HEK293T (cell line): ENCODE measurements at regions of chr20 and their contacts with region 1.

Region 1: GRCh38 chr20:31496761-31497295 is 17.4 kb upstream of the HM13 start:
- DNase-seq: no peak

Region 2: GRCh38 chr20:31390490-31390889 is 106.3 kb before region 1 on chr20 and contains the start of gene DEFB119:
- CTCF ChIA-PET with region 1: no interaction called
- POLR2A ChIA-PET with region 1: no interaction called
- DNase-seq: no peak

Region 3: DNA sequence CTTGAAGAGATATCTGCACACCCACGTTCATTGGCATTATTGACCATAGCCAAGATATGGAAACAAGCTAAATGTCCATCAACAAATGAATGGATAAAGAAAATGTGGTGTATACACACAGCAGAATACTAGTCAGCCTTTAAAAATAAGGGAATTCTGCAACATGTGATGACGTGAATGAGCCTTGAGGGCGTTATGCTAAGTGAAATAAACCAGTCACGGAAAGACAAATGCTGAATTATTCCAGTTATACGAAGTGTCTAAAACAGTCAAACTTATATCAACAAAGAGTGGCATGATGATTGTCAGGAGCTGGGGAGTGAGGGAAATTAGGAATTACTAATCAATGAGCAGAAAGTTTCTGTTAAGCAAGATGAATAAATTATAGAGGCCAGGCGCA is 82.4 kb before region 1 on chr20:
- CTCF ChIA-PET with region 1: interaction called, 14 read pairs
- POLR2A ChIA-PET with region 1: no interaction called
- DNase-seq: no peak

Region 4: DNA sequence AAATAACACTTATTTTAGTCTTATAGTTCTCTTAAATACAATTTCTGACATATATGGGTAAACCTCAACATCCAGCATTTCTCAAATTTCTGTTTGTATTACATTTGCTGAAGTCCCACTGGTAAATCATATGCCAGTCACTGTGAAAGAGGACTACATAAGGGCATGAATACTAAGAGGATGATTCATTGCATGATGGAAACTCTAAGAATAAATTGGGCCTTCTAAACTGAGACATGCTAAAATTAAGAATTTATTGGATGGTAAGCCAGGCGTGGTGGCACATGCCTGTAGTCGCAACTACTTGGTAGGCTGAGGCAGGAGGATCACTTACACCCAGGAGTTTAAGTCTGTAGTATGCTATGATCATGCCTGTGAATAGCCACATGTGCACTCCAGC is 44.3 kb before region 1 on chr20:
- CTCF ChIA-PET with region 1: interaction called, 45 read pairs
- POLR2A ChIA-PET with region 1: interaction called, 3 read pairs
- DNase-seq: no peak